ENCODE measurements at regions of chr12 and their contacts with region 1.

Region 1: DNA sequence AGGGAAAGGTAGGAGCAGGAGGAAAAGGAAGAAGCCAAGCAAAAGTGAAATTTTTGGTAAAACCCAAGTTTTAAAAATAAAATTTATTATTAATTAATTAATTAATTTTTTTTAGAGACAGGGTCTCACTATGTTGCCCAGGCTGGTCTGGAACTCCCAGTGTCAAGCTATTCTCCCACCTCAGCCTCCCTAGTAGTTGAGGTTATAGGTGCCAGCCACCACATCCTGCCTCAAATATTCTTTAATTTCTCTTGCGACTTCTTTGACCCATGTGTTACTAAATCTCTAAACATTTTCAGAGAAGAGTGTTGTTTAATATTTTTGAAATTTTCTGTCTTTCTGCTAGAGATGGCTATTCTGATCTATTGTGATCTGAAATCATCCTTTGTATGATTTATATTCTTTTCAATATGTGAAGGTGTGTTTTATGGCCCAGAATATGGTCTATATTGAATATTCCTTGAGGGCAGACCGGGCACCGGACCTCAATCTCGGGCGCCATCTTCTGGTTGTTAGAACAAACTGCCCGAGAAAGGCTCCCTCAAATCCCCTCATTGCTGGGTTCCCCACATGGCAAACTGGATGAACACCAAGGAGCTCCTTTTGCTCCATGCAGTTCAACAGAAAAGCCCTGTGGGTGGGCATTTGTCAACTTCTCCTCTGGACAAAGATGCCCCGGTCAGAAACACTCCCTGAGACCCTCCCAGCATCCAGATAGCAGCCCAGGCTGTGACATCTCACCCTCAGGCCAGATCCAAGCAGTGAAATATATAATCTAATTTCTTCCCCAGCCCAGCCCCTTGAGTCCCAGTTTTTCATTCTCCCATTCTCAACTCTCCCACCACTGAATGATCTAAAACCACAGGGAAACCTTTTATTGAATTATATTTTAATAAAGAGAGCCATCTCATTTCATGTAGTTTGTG is 110.5 kb downstream of the ASCL4 start:
- DNase-seq: peak; percentile 74
- H3K4me3 ChIP-seq: no peak overlapping the region
- H3K27ac ChIP-seq: no peak overlapping the region
- H3K4me1 ChIP-seq: no peaks in the 10 kb centered on the region
- H3K27me3 ChIP-seq: peaks cover 0 to 5% (median 0%) of the 10 kb centered on the region in 3 donors
- CTCF ChIP-seq: peak in 3 of 4 experiments; percentile 25 to 51 (median 48)
- EP300 ChIP-seq: no peak
- POLR2A ChIP-seq: no peak

Region 2: DNA sequence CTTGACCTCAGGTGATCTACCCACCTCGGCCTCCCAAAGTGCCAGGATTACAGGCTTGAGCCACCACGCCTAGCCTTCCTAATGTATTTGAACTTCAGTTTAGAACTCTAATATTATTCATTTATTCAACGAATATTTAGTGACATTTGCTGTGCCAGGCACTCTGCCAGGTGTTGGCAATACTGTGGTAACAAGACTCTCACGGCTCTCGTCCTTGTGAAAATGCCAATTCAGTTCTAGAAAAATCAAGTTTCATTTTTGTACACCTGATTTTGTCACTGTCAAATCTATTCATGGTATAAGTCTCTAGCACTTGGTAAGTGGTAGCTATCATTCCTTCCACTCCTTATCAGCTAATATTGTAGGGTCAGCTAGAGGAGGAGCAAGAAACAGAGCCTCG is 205.7 kb before region 1 on chr12:
- intact Hi-C with region 1: loop called (anchors 5 kb)
- DNase-seq: no peak
- H3K4me3 ChIP-seq: no peak overlapping the region
- H3K27ac ChIP-seq: no peak overlapping the region
- H3K4me1 ChIP-seq: no peaks in the 10 kb centered on the region
- H3K27me3 ChIP-seq: peaks cover 0 to 23% (median 0%) of the 10 kb centered on the region in 3 donors
- CTCF ChIP-seq: no peak
- EP300 ChIP-seq: no peak
- POLR2A ChIP-seq: no peak

Region 3: DNA sequence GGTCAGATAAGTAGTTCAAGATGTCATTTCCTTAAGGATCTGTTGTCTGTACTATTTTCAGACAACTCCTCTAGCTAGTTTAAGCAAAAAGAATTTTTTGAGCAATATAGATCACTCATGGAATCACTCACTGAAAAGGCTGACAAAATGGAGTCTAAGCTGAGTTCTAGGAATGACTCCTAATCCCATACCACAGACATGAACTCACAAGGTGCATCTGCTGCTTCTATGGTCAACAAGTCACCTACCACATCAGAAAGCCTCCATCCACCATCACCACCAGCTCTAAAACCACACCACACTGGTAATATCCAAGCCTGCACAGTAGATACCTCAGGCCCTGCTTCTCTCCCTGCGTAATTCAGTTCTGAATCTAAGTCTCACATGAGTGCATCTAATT is 166.4 kb before region 1 on chr12:
- intact Hi-C with region 1: no loop called
- DNase-seq: no peak
- H3K4me3 ChIP-seq: no peak overlapping the region
- H3K27ac ChIP-seq: no peak overlapping the region
- H3K4me1 ChIP-seq: no peaks in the 10 kb centered on the region
- H3K27me3 ChIP-seq: no peaks in the 10 kb centered on the region
- CTCF ChIP-seq: no peak
- EP300 ChIP-seq: no peak
- POLR2A ChIP-seq: no peak

Region 4: GRCh38 chr12:107760809-107761501 is 124.1 kb before region 1 on chr12 and contains the start of gene PRDM4:
- intact Hi-C with region 1: loop called (anchors 5 kb)
- DNase-seq: peak; percentile 97
- H3K4me3 ChIP-seq: peak within 1 kb of the TSS; percentile 84 to 94 (median 86)
- H3K27ac ChIP-seq: peak within 1 kb of the TSS; percentile 67 to 80 (median 76)
- H3K4me1 ChIP-seq: peaks cover 0 to 34% (median 25%) of the 10 kb centered on the region in 4 donors
- H3K27me3 ChIP-seq: no peaks in the 10 kb centered on the region
- CTCF ChIP-seq: peak in 1 of 4 experiments; percentile 29
- EP300 ChIP-seq: no peak
- POLR2A ChIP-seq: peak; percentile 46 to 54
- total RNA-seq, gene PRDM4: 19.7 to 25.7 (median 23.0) TPM

Region 5: DNA sequence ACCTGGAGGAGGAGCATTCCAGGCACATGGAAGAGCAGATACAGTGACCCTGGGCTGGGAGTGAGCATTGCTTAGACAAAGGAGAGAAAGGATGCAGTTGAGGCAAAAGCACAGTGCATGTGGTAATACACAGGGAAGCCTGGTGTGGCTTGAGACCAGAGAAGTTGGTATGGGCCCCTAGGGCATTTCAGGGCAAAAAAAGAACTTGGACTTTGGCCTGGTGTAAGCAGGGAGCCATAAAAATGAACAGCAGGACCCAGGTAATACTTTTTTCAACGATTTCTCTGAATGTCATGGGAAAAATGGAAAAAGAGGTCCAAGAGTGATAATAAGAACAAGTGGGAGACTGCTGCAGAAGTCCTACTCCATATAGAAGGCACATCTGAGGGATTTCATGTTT is 53.4 kb after region 1 on chr12:
- intact Hi-C with region 1: no loop called
- DNase-seq: no peak
- H3K4me3 ChIP-seq: no peak overlapping the region
- H3K27ac ChIP-seq: no peak overlapping the region
- H3K4me1 ChIP-seq: no peaks in the 10 kb centered on the region
- H3K27me3 ChIP-seq: peaks cover 0 to 30% (median 0%) of the 10 kb centered on the region in 3 donors
- CTCF ChIP-seq: no peak
- EP300 ChIP-seq: no peak
- POLR2A ChIP-seq: no peak